Sciatic nerve (tissue), 2 donors: ENCODE measurements at regions of chr1 and their contacts with region 1.

Region 1: GRCh38 chr1:9494929-9495758 is 44.1 kb upstream of the SLC25A33 start:
- DNase-seq: peak; percentile 76
- ATAC-seq: peak; percentile 63

Region 2: DNA sequence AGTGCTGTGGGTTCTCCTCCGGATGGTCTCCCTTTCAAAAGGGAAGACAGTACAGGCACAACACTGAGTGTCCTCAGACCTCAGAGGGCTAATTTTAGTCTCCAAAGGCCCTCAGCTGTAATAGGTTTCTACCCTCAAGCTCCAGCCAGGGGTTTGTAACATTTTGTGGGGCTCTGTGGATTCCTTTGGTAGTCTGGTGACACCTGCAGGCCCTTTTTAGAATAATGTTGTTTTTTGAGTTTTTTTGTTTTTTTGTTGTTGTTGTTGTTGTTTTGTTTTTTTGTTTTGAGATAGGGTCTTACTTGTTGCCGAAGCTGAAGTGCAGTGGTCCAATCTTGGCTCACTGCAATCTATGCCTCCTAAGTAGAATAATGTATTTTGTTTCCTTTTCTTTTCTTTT is 78.6 kb after region 1 on chr1:
- intact Hi-C with region 1: loop called (anchors 2 kb)
- DNase-seq: no peak
- ATAC-seq: no peak